Right ventricle myocardium inferior (tissue), 1 donor: ENCODE measurements at regions of chr11 and their contacts with region 1.

Region 1: GRCh38 chr11:79393362-79394043 is 47.3 kb downstream of the TENM4 start:
- DNase-seq: no peak
- ATAC-seq: no peak

Region 2: DNA sequence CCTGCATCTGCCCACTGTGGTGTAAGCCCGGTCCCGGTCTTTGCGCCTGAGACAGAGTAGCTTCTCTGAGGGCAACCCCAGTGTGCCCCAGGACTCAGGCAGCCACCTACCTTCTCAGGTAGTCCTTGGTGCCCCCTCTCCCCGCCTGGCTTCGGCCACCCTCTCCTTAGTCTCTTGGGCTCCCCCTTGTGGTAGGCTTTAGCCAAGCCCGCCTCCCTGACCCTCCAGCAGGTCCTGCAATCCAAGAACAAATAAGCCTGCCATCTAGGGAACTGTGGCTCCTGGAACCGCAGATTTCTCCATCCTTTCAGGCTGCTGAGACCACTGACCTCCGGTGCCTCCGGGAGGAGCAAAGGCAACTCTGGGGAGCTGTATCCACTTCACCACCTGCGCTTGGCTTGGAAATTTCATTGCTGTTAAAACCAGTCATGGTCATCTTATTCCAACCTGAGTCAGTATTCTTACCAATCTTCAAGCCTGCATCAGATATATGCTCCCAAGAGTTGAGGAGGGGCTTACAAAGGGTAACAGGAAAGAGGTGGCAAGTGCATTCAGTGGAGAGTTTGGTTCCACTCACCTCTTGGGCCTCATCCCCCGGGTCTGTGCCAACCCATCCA is 100.2 kb after region 1 on chr11:
- intact Hi-C with region 1: loop called (anchors 10 kb)
- DNase-seq: no peak
- ATAC-seq: peak; percentile 75